MCF 10A (cell line): ENCODE measurements at regions of chr14 and their contacts with region 1.

Region 1: DNA sequence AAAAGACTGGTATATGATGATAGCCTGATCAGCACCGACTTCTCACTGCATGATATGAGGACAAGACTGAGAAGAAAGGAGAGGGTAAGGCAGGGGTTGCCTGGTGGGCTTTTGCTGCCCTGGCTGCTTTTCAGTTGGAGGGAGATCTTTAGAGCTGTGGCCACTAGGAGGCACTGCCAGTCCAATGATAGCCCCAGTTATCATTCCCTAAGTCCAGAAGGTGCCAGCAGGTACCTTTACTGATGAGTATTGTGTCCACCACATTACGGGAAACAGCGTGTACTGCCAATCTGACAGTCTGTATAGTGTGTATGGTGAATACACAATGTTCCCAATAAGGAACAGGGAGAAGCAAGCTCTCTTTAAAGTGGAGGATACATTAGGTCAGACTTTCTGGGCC is 55.8 kb upstream of the CCDC175 start:
- DNase-seq: peak; percentile 65
- H3K4me3 Mint-ChIP-seq: no peak overlapping the region
- H3K27ac Mint-ChIP-seq: no peak overlapping the region
- H3K4me1 Mint-ChIP-seq: peaks cover 21% of the 10 kb centered on the region
- H3K27me3 Mint-ChIP-seq: no peaks in the 10 kb centered on the region
- CTCF ChIP-seq: peak; percentile 80

Region 2: GRCh38 chr14:59529189-59529588 is 103.2 kb before region 1 on chr14:
- CTCF ChIA-PET with region 1: no interaction called
- POLR2A ChIA-PET with region 1: no interaction called
- intact Hi-C with region 1: no loop called
- DNase-seq: no peak
- H3K4me3 Mint-ChIP-seq: no peak overlapping the region
- H3K27ac Mint-ChIP-seq: no peak overlapping the region
- H3K4me1 Mint-ChIP-seq: no peaks in the 10 kb centered on the region
- H3K27me3 Mint-ChIP-seq: no peaks in the 10 kb centered on the region
- CTCF ChIP-seq: no peak

Region 3: DNA sequence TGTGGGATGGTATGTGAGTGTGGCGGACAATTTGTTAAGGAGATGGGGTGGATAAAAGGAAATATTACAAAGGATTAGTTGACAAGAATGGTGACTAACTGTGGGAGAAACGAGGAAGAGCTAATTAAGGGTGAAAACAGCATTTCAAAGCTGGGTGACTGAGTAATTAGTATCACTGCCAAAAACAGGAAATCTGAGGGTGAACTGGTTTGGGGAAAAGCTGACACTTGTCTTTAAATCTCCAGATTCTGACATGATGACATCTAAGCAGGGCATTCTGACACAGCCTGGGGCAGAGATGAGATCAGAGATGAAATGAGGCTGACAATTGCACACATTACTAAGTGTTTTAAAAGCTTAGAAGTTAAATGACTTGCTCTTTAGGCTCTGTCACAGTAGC is 13.3 kb before region 1 on chr14:
- CTCF ChIA-PET with region 1: interaction called, 14 read pairs
- POLR2A ChIA-PET with region 1: interaction called, 3 read pairs
- intact Hi-C with region 1: no loop called
- DNase-seq: peak; percentile 3
- H3K4me3 Mint-ChIP-seq: no peak overlapping the region
- H3K27ac Mint-ChIP-seq: no peak overlapping the region
- H3K4me1 Mint-ChIP-seq: peaks cover 25% of the 10 kb centered on the region
- H3K27me3 Mint-ChIP-seq: no peaks in the 10 kb centered on the region
- CTCF ChIP-seq: no peak

Region 4: DNA sequence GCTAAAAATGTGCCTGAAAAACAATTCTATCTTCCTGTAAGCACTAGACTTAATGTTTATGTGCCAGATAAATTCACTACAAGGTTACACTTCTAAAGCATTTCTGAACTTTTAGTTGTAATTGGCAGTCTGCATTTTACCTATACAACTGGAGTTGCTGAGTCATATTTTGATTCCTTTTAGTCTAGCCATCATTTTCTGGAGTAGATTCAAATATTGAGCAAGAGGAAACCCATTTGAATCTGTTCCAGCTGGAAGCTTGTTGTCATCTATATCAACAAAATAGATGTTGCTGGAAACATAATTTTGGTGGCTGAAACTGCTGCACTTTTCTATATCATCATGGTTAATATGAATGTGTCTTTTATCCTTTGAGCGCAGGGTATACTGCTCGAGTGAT is 66.4 kb after region 1 on chr14:
- CTCF ChIA-PET with region 1: interaction called, 20 read pairs
- POLR2A ChIA-PET with region 1: interaction called, 3 read pairs
- intact Hi-C with region 1: loop called (anchors 5 kb)
- DNase-seq: peak; percentile 92
- H3K4me3 Mint-ChIP-seq: peak overlapping the region; percentile 53
- H3K27ac Mint-ChIP-seq: peak overlapping the region; percentile 98
- H3K4me1 Mint-ChIP-seq: peaks cover 48% of the 10 kb centered on the region
- H3K27me3 Mint-ChIP-seq: no peaks in the 10 kb centered on the region
- CTCF ChIP-seq: no peak

Region 5: GRCh38 chr14:59707778-59708561 is 75.6 kb after region 1 on chr14:
- CTCF ChIA-PET with region 1: interaction called, 20 read pairs
- POLR2A ChIA-PET with region 1: interaction called, 8 read pairs
- intact Hi-C with region 1: no loop called
- DNase-seq: peak; percentile 61
- H3K4me3 Mint-ChIP-seq: peak overlapping the region; percentile 2
- H3K27ac Mint-ChIP-seq: peak overlapping the region; percentile 95
- H3K4me1 Mint-ChIP-seq: peaks cover 37% of the 10 kb centered on the region
- H3K27me3 Mint-ChIP-seq: no peaks in the 10 kb centered on the region
- CTCF ChIP-seq: peak; percentile 22

Region 6: GRCh38 chr14:59905188-59905587 is 272.8 kb after region 1 on chr14:
- CTCF ChIA-PET with region 1: interaction called, 31 read pairs
- POLR2A ChIA-PET with region 1: no interaction called
- intact Hi-C with region 1: no loop called
- DNase-seq: peak; percentile 44
- H3K4me3 Mint-ChIP-seq: no peak overlapping the region
- H3K27ac Mint-ChIP-seq: no peak overlapping the region
- H3K4me1 Mint-ChIP-seq: no peaks in the 10 kb centered on the region
- H3K27me3 Mint-ChIP-seq: no peaks in the 10 kb centered on the region
- CTCF ChIP-seq: no peak

Region 7: DNA sequence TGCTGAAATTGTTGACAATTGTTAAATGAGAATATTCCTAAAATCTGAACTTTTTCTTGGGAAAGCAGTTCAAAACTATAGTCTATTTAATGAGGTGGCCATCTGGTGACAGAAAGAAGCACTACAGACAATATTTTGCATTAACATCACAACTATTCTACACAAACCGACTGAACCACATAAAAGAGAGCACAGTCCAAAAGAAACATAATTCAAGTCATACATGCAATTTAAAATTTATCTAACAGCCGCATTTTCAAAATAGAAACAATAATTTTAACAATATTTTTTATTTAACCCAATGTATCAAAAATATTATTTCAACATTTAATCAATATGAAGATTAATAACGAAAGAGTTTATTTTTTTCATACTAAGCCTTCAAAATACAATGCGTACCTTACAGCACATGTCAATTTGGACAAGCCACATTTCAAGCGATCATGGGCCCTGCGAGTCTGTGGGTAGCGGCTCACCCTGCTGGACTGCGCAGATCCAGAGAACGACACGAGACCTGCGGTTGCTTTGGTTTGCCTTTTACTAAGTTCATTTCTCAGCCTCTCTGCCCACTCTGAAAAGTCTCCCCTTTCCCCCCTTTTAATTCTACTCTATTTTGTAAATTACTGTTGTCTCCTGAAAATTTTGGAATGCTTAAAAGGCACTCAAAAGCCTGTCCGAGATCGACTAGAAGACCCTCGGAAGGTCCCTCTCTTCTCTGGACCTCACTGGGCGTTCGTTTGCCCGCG is 286.6 kb after region 1 on chr14:
- CTCF ChIA-PET with region 1: interaction called, 24 read pairs
- POLR2A ChIA-PET with region 1: no interaction called
- intact Hi-C with region 1: loop called (anchors 5 kb)
- DNase-seq: peak; percentile 34
- H3K4me3 Mint-ChIP-seq: no peak overlapping the region
- H3K27ac Mint-ChIP-seq: no peak overlapping the region
- H3K4me1 Mint-ChIP-seq: no peaks in the 10 kb centered on the region
- H3K27me3 Mint-ChIP-seq: no peaks in the 10 kb centered on the region
- CTCF ChIP-seq: peak; percentile 34